ENCODE measurements at regions of chr2 and their contacts with region 1.

Region 1: DNA sequence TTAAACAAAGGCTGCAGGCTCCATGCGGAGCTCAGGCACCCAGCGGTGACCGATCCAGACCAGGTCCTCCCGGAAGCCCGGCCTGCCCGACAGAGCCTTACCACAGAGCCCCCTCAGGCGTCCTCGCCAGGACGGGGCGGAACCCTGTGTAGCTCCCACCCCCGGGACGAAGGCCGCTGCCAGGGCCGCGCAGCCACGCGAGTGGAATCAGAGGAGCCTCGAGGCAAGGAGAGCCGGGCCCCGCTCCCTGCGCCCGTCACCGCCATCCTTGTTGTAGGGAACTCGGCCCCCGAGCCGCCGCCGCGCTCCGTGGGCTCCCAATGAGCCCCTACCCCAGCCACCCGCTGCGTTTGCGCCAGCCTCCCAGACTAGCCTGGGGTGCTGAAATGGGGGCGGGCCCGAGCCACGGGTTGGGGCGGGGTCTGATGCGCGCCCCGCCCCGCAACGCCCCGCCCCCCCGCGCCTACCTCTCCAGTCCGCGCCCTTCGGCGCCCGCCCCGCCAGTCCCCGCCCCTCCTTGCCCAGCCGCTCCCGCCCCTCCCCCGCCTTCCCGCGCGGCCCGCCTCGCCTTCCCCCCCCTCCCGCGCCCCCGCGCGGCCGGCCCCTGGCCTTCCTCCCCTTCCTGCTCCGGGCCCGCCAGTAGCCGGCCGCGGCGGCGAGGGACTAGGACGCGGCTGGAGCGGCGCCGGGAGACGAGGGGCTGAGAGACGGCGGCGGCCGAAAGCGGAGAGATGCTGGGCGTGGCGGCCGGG is at the start of gene LIMS1:
- DNase-seq: peak; percentile 89
- H3K4me3 ChIP-seq: peak within 1 kb of the TSS; percentile 76
- H3K27ac ChIP-seq: peak within 1 kb of the TSS; percentile 48
- H3K4me1 ChIP-seq: peaks cover 15% of the 10 kb centered on the region
- CTCF ChIP-seq: no peak
- total RNA-seq, gene LIMS1: 33.6 and 53.3 TPM in 2 replicates

Region 2: DNA sequence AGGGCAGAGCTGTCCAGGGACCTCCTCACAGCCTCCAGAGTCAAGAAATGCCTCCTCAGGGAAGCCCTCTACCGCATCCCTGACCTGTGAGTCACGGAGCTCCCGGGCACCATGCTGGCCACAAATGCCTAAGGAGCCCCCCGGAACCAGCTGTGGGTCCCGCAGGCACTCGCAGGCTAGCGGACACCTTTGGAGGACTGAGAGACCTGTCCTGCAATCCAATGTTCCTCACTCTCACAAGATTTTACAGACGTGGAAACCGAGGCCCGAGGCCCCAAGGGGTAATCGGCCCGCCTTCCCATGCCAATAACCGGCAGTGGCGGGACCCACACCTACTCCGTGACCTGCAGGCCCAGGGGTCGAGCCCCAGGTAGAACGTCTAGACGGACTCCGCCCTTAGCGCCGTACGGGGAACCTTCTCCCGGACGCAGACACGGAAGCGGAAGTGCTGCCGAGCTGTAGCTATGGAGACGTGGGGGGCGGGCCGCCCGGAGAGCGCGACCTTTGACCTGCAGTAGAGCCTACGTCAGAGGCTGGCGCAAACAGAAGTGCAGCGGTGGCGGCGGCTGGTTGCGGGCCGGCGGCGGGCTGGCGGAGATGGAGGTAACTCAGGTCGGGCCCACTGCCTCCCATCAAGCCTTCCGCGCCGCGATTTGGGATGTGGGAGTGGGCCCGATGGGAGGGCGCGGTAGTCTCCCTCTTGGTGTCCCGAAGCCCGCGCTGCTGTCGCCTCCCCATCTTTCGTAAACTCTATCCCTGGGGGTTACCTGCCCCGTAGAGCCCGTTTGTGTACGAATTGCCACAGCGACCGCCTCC is 85.1 kb before region 1 on chr2 and contains the start of gene GCC2:
- CTCF ChIA-PET with region 1: no interaction called
- POLR2A ChIA-PET with region 1: interaction called, 10 read pairs
- intact Hi-C with region 1: loop called (anchors 5 kb)
- DNase-seq: peak; percentile 96
- H3K4me3 ChIP-seq: peak within 1 kb of the TSS; percentile 95
- H3K27ac ChIP-seq: peak within 1 kb of the TSS; percentile 39
- H3K4me1 ChIP-seq: peaks cover 12% of the 10 kb centered on the region
- CTCF ChIP-seq: no peak
- total RNA-seq, gene GCC2: 19.7 and 28.2 TPM in 2 replicates

Measured in OCI-LY7 (cell line).